ENCODE measurements at regions of chr6 and their contacts with region 1.

Region 1: GRCh38 chr6:291697-292505 is at the start of gene DUSP22:
- DNase-seq: peak; percentile 58 to 88
- H3K4me3 ChIP-seq: peak within 1 kb of the TSS; percentile 57
- H3K27ac ChIP-seq: peak within 1 kb of the TSS; percentile 23
- H3K4me1 ChIP-seq: no peaks in the 10 kb centered on the region; the same call in 1 of the 2 replicates
- H3K27me3 ChIP-seq: peaks cover 55% of the 10 kb centered on the region
- CTCF ChIP-seq: no peak
- total RNA-seq, gene DUSP22: 23.7 and 25.5 TPM in 2 replicates

Region 2: DNA sequence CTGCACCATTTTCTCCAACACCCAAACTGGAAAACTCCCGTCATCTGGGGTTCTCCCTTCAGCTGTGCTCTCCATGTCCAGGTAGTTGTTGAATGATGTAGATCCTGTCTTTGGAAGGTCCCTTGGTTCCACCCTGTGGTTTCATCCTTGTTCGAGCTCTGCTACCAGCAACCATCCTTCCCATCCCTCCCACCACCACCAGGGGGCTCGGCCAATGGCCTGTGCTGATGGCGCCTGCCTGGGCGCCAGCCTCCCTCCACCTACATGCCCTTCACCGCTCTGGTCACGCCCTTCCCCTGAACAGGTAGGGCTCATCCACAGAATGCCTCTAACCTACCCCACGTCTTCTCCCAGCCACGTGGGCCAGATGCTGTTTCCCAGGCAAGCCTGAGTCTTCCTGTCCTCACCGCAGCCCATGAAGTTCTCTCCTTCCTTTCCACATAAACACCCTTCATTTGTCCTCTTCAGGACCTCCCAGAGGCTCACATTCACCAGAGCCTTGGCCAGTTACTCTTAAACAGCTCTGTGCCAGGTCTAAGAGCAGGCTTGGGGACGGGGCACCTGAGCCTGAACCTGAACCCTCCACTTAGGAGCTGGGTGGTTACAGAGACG is 74.7 kb before region 1 on chr6:
- CTCF ChIA-PET with region 1: interaction called, 3 read pairs
- POLR2A ChIA-PET with region 1: no interaction called
- intact Hi-C with region 1: loop called (anchors 5 kb)
- DNase-seq: peak in 1 of 2 experiments; percentile 5
- H3K4me3 ChIP-seq: no peak overlapping the region
- H3K27ac ChIP-seq: no peak overlapping the region
- H3K4me1 ChIP-seq: no peaks in the 10 kb centered on the region
- H3K27me3 ChIP-seq: peaks cover 5% of the 10 kb centered on the region; the same call in 1 of the 2 replicates
- CTCF ChIP-seq: peak; percentile 45

Region 3: DNA sequence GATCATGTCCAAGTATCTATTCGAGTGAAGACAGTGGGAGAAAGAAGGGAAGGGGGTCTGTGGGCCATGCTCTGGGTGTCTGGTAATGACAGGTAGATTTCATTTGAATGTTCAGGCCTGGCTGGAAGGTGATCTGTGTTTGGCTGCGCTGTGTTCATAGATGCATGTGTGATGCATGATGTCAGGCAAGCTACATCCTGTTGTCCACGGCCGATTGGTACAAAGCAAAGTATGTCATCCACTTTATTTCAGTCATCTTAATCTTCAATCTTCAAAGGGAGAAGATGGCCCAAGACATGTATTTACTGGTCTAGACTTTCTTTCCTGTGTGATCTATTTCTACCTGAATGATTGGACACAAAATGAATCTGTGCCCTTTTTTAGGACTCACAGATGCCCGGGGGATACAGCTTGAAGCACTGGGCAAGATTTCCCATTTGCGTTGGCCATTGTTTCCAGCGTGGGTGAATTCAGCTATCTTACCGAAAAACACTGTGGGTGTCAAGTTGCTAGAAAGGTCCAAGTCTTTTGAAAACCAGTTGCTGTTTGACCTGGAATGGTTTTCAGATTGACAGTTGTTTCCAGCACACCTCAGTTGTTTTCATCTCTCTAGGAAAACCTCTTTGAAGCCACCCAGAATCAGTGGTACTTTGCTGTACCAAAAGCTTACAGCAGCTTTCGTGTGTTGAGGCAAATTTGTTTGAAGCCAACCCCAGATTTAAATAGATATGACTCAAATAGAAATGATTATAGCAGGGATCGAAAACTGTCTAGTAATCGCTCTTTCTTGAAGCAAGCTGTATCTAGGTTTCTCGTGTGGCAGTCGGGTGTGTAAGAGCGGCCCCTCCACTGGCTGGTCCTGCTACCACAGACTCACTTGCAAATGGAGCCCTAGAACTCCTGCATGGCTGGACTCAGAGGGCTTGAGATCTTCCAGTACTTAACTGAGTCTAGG is 27.6 kb after region 1 on chr6:
- CTCF ChIA-PET with region 1: no interaction called
- POLR2A ChIA-PET with region 1: no interaction called
- intact Hi-C with region 1: no loop called
- DNase-seq: no peak
- H3K4me3 ChIP-seq: no peak overlapping the region
- H3K27ac ChIP-seq: no peak overlapping the region
- H3K4me1 ChIP-seq: no peaks in the 10 kb centered on the region
- H3K27me3 ChIP-seq: peaks cover 90% of the 10 kb centered on the region
- CTCF ChIP-seq: no peak

Region 4: DNA sequence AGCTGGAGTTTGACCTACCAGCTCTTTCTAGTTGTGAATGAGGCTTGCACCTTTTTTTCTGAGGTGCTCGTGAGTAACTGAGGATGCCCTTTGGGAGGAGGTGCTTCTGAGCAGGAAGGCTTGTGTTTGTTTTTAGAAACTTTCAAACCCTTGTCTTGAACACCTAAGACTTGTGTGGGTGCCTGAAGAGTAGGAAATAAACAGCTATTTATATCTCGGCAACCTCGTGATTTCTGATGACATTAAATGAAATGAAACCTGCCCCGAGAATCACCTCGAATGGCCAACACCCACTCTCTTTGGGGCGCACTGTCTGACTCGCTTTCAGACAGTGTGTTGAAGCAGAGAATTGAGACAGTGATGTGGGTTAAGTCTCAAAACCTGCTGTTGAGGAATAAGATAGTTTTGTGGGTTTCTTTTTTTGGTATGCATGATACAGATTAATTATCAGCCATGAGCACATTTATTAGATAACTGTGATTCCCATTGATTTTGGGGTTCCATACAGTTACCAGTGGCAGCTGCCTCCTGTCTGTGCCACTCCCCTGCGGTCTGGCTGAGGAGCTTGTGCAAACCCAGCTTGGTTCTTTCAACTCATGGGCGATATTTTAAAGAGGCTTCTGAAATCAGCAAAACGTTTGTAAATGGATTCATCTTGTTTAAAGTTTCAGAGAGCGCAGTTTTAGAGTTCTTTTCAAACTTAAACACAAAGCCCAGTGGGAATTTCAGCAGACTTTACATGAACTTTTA is 108.1 kb after region 1 on chr6:
- CTCF ChIA-PET with region 1: no interaction called
- POLR2A ChIA-PET with region 1: no interaction called
- intact Hi-C with region 1: no loop called
- DNase-seq: no peak
- H3K4me3 ChIP-seq: no peak overlapping the region
- H3K27ac ChIP-seq: no peak overlapping the region
- H3K4me1 ChIP-seq: no peaks in the 10 kb centered on the region
- H3K27me3 ChIP-seq: peaks cover 86% of the 10 kb centered on the region
- CTCF ChIP-seq: no peak

Region 5: GRCh38 chr6:1242446-1242845 is 950.5 kb after region 1 on chr6:
- CTCF ChIA-PET with region 1: interaction called, 24 read pairs
- POLR2A ChIA-PET with region 1: no interaction called
- intact Hi-C with region 1: no loop called
- DNase-seq: no peak
- H3K4me3 ChIP-seq: no peak overlapping the region
- H3K27ac ChIP-seq: no peak overlapping the region
- H3K4me1 ChIP-seq: peaks cover 8% of the 10 kb centered on the region; the same call in 1 of the 2 replicates
- H3K27me3 ChIP-seq: no peaks in the 10 kb centered on the region
- CTCF ChIP-seq: no peak

Measured in PC-9 (cell line).